ENCODE measurements at regions of chr6 and their contacts with region 1.

Region 1: DNA sequence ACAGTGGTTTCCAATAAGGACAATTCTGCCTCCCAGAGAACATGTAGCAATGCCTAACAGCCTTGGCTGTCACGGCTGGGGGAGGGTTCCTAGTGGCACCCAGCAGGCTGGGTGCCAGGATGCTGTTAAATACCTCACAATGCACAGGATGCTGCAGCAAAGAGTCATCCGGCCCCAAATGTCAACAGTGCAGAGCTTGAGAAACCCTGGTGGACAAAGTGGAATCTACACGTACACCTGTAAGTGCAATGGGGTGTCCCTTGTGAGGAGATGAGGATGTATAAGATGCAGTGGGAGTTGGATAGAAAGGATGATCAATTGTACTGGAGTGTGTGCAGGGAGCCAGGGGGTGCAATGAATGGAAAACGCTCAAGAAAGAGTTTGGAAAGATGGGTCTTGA is 142.4 kb downstream of the FNDC1 start:
- DNase-seq: no peak
- H3K4me3 Mint-ChIP-seq: no peak overlapping the region
- H3K27ac Mint-ChIP-seq: no peak overlapping the region
- H3K4me1 Mint-ChIP-seq: no peaks in the 10 kb centered on the region
- H3K27me3 Mint-ChIP-seq: peaks cover 5% of the 10 kb centered on the region

Region 2: GRCh38 chr6:159324596-159324995 is 13.0 kb after region 1 on chr6:
- intact Hi-C with region 1: no loop called
- DNase-seq: no peak
- H3K4me3 Mint-ChIP-seq: no peak overlapping the region
- H3K27ac Mint-ChIP-seq: no peak overlapping the region
- H3K4me1 Mint-ChIP-seq: no peaks in the 10 kb centered on the region
- H3K27me3 Mint-ChIP-seq: peaks cover 4% of the 10 kb centered on the region

Region 3: GRCh38 chr6:159351707-159352106 is 40.1 kb after region 1 on chr6:
- intact Hi-C with region 1: loop called (anchors 1 kb)
- DNase-seq: no peak
- H3K4me3 Mint-ChIP-seq: no peak overlapping the region
- H3K27ac Mint-ChIP-seq: no peak overlapping the region
- H3K4me1 Mint-ChIP-seq: no peaks in the 10 kb centered on the region
- H3K27me3 Mint-ChIP-seq: peaks cover 6% of the 10 kb centered on the region

Measured in activated T-helper 1 cell treated with anti-CD3 and anti-CD28 coated beads, Interleukin-12 subunit alpha, Interleukin-12 subunit beta, Interleukin-2, Interleukin-4 antibody, amounts not matched to agents 30 ng/mL and 10 ng/mL and 1 ng/mL, durations not matched to agents 14 hours and 24 hours and 36 hours (primary cell).